ENCODE measurements at regions of chr17 and their contacts with region 1.

Region 1: GRCh38 chr17:46044286-46044928 is 45.4 kb downstream of the STH start:
- DNase-seq: peak in 1 of 2 donors; percentile 88
- ATAC-seq: peak; percentile 66 to 88 (median 82)
- H3K4me3 ChIP-seq: no peak overlapping the region
- H3K27ac ChIP-seq: peak overlapping the region in 7 of 10 donors; percentile 3 to 47 (median 23)
- H3K4me1 ChIP-seq: peaks cover 0 to 53% (median 32%) of the 10 kb centered on the region in 9 donors
- H3K27me3 ChIP-seq: no peaks in the 10 kb centered on the region
- CTCF ChIP-seq: peak; percentile 74 to 93 (median 85)

Region 2: DNA sequence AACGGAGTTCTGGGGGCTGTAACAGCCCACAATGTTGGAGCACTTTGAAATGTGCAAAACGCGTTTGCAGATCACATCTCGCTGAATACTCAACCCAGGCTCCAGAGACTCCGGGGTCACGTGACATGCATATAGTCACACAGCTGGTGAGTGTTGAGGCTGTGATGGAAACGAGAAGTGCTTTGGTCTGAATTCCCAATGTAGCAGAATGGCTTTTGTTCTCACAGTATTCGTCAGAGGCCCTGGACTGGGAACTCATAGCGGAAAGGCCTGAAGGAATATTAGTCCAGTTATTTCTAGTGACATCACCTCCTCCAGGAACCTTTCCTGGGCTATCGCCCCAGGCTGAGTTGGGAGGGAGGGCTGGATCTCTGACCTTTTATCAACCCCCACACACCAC is 356.1 kb before region 1 on chr17:
- intact Hi-C with region 1: no loop called
- DNase-seq: no peak
- ATAC-seq: no peak
- H3K4me3 ChIP-seq: no peak overlapping the region
- H3K27ac ChIP-seq: no peak overlapping the region
- H3K4me1 ChIP-seq: no peaks in the 10 kb centered on the region
- H3K27me3 ChIP-seq: peaks cover 0 to 61% (median 43%) of the 10 kb centered on the region in 7 donors
- CTCF ChIP-seq: no peak

Region 3: DNA sequence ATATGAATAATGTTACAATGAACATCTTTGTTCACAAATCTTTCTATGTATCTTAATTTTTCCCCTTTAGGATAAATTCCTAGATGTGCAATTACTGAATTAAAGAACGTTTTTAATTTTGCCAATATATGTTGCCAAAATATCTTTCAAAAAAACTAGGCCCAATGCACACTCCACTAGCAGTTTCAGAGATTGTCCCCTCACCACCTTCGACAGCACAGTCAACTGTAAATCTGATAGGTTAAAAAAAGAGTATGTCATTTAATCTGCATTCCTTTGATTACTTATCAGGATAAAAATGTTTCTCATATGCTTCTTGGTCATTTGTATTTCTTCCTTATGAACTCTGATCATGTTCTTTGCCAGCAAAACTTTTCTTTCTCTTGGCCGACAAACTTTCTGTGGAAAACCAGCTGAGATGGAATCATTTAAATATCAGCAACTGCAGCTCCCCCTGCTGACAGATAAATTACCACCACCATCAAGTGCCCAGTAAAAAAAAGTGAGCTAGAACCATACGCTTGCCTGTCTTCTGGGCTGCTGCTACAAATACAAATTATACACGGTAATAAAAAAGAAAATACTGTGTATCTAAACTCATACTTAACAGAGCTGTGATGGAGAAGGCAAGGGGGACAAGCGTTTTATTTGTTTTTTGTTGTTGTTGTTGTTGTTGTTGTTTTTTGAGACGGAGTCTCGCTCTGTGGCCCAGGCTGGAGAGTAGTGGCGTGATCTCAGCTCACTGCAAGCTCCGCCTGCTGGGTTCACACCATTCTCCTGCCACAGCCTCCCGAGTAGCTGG is 168.4 kb after region 1 on chr17:
- intact Hi-C with region 1: loop called in 7 of 10 experiments (anchors 1 to 5 kb)
- DNase-seq: peak in 1 of 2 donors; percentile 83
- ATAC-seq: peak in 7 of 8 donors; percentile 71 to 85 (median 77)
- H3K4me3 ChIP-seq: no peak overlapping the region
- H3K27ac ChIP-seq: peak overlapping the region in 2 of 10 donors; percentile 4 to 34
- H3K4me1 ChIP-seq: peaks cover 0 to 33% (median 21%) of the 10 kb centered on the region in 9 donors
- H3K27me3 ChIP-seq: no peaks in the 10 kb centered on the region
- CTCF ChIP-seq: peak; percentile 66 to 94 (median 85)